ENCODE measurements at regions of chrX and their contacts with region 1.

Region 1: DNA sequence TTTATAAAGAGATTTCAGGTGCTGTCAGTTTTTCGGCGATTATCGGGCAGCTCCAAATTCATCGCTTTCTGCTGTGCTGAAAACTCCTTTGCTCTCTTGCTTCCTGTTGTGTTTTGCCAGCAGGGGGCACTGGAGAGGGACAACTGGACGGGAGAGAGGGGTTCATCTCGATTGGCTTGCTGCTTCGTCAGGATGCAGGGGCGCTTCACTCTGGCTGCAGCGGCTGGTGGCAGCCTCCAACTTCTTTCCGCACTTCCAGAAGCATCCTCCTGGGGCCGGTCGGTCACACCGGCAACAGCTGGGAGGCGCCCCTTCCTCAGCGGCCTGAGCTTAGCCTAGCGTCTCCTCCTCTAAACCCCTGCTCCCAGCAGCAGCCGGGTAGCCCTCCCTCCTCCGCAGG is 29.5 kb downstream of the MSL3 start:
- DNase-seq: peak; percentile 37 to 67 (median 50)
- ATAC-seq: peak in 3 of 4 donors; percentile 7 to 63 (median 48)
- H3K4me3 ChIP-seq: peak overlapping the region in 7 of 12 donors; percentile 3 to 34 (median 27)
- H3K27ac ChIP-seq: no peak overlapping the region
- H3K4me1 ChIP-seq: no peaks in the 10 kb centered on the region
- H3K27me3 ChIP-seq: peaks cover 0 to 6% (median 0%) of the 10 kb centered on the region in 9 donors
- CTCF ChIP-seq: peak; percentile 17 to 64 (median 46)
- POLR2A ChIP-seq: no peak

Region 2: GRCh38 chrX:11629593-11630211 is 157.9 kb before region 1 on chrX:
- intact Hi-C with region 1: no loop called
- DNase-seq: peak in 4 of 5 donors; percentile 37 to 65 (median 46)
- ATAC-seq: peak in 3 of 4 donors; percentile 85 to 92 (median 89)
- H3K4me3 ChIP-seq: no peak overlapping the region
- H3K27ac ChIP-seq: peak overlapping the region in 4 of 12 donors; percentile 13 to 26 (median 22)
- H3K4me1 ChIP-seq: peaks cover 0 to 7% (median 0%) of the 10 kb centered on the region in 12 donors
- H3K27me3 ChIP-seq: peaks cover 0 to 4% (median 0%) of the 10 kb centered on the region in 9 donors
- CTCF ChIP-seq: peak in 1 of 12 donors; percentile 6
- POLR2A ChIP-seq: no peak

Region 3: DNA sequence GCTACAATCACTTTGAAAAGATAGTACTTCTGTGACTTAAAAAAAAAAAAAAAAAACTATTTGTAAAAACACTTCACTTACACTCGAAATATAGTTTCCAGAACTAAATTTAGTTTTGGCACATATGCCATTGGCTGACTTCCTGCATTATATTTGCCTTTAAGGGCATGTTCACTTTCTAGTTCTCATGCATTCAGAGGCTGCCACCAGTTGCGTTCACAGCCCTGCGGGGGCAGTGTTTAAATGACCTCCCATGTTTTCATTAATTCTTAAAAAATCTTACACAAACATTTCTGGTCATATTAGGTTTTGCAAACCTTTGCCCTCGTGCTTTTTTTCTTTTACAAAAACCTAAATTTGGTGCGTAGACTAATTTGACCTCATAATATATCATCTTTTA is 109.4 kb before region 1 on chrX:
- intact Hi-C with region 1: no loop called
- DNase-seq: no peak
- ATAC-seq: no peak
- H3K4me3 ChIP-seq: no peak overlapping the region
- H3K27ac ChIP-seq: no peak overlapping the region
- H3K4me1 ChIP-seq: peaks cover 0 to 4% (median 0%) of the 10 kb centered on the region in 12 donors
- H3K27me3 ChIP-seq: peaks cover 0 to 5% (median 0%) of the 10 kb centered on the region in 9 donors
- CTCF ChIP-seq: peak in 4 of 12 donors; percentile 12 to 25 (median 17)
- POLR2A ChIP-seq: no peak

Region 4: GRCh38 chrX:11908371-11908770 is 120.8 kb after region 1 on chrX:
- intact Hi-C with region 1: loop called in 1 of 10 experiments (anchors 5 kb)
- DNase-seq: no peak
- ATAC-seq: no peak
- H3K4me3 ChIP-seq: no peak overlapping the region
- H3K27ac ChIP-seq: no peak overlapping the region
- H3K4me1 ChIP-seq: no peaks in the 10 kb centered on the region
- H3K27me3 ChIP-seq: no peaks in the 10 kb centered on the region
- CTCF ChIP-seq: peak in 3 of 12 donors; percentile 14 to 29 (median 24)
- POLR2A ChIP-seq: no peak

Measured in heart left ventricle (tissue), 16 donors.